Activated CD4-positive, alpha-beta memory T cell treated with anti-CD3 and anti-CD28 coated beads for 36 hours (primary cell): ENCODE measurements at regions of chr4 and their contacts with region 1.

Region 1: DNA sequence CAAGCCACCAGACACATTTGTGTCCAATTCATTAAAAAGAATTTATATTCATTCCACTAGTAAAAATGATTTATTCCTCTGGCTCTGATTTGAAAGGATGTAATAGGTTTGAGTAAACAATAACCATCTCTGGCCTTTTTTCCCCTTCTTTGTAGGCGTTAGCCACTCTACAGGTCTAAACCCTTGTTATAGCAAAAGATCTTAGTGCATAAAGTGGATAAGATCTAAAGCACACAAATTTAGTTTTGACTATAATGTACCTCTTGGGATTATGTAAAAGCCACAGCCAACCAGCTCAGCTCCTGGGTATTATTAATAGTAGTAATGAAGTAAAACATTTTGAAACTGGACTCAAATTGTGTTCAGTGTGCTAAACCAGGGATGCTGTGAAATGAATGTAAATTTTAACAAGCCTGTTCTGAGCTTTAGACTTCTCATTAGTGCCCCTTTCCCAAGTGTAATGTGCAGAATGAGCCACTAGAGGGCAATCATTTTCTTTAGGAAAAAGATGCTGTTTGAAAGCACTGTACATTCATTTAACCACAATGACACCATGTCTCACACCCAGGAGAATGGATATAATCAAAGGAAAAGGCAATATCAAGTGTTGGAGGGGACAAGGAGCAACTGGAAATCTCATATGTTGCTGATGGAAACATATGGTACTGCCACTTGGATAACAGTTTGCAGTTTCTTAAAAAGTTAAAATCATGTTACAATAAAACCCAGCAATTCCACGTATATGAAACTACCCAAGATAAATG is 69.7 kb downstream of the KLHL8 start:
- DNase-seq: no peak
- H3K4me3 Mint-ChIP-seq: no peak overlapping the region
- H3K27ac Mint-ChIP-seq: no peak overlapping the region
- H3K4me1 Mint-ChIP-seq: no peaks in the 10 kb centered on the region
- H3K27me3 Mint-ChIP-seq: no peaks in the 10 kb centered on the region

Region 2: DNA sequence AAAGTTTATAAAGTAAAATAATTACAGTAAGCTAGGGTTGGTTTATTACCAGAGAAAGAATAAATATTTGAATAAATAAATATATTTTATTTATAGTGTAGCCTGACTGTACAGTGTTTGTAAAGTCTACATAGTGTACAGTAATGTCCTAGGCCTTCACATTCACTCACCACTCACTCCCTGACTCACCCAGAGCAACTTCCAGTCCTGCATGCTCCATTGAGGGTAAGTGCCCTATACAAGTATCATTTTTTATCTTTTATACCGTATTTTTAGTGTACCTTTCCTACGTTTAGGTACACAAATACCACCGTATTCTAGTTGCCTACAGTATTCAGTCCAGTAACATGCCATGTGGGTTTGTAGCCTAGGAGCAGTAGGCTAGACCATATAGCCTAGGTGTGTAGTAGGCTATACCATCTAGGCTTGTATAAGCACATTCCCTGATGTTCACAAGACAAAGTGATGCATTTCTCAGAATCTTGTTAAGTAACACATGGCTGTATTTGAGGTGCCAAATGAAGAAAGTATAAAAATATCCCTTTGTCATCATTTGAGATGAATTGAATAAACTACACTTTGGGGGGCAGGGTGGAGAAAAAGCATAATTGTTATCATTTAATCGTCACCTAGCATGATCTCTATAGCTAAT is 84.5 kb after region 1 on chr4:
- CTCF ChIA-PET with region 1: interaction called, 50 read pairs
- POLR2A ChIA-PET with region 1: no interaction called
- intact Hi-C with region 1: loop called (anchors 1 kb)
- DNase-seq: no peak
- H3K4me3 Mint-ChIP-seq: peak overlapping the region; percentile 73
- H3K27ac Mint-ChIP-seq: no peak overlapping the region
- H3K4me1 Mint-ChIP-seq: no peaks in the 10 kb centered on the region
- H3K27me3 Mint-ChIP-seq: peaks cover 2% of the 10 kb centered on the region

Region 3: GRCh38 chr4:87240341-87240740 is 89.7 kb after region 1 on chr4:
- CTCF ChIA-PET with region 1: interaction called, 50 read pairs
- POLR2A ChIA-PET with region 1: no interaction called
- intact Hi-C with region 1: loop called (anchors 1 kb)
- DNase-seq: no peak
- H3K4me3 Mint-ChIP-seq: no peak overlapping the region
- H3K27ac Mint-ChIP-seq: no peak overlapping the region
- H3K4me1 Mint-ChIP-seq: no peaks in the 10 kb centered on the region
- H3K27me3 Mint-ChIP-seq: peaks cover 6% of the 10 kb centered on the region